ENCODE measurements at regions of chr1 and their contacts with region 1.

Region 1: DNA sequence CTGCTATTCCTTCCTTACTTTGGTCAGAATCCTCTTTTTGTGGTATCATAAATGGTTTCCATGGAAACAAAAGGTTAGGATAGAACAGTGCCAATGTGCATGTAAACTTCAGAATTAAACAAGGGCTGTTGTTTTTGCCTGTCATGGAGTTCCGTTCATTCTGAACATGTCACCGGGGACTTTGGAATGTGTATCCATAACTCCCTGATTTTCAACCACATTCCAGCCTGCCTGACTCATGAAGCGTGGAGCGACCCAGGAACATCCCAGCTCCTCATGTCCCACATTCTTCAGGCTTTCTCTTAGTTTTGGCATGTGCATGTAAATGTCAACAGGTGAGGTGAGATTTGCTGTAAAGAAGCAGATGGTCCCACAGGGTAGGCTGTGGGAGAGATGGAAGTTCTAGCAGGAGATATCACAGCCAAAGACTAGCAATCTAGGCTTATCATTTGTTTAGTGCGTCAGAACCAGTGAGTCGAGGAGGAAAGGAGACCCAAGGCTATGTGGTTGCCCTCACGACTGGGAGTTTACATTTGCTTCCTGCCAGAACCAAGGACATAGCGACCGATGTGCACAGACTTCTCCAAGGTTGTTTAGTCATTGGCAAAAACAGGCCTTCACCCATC is 23.0 kb upstream of the DNAJC11 start:
- DNase-seq: no peak
- H3K4me3 ChIP-seq: no peak overlapping the region
- H3K4me3 Mint-ChIP-seq: no peak overlapping the region
- H3K27ac ChIP-seq: no peak overlapping the region
- H3K27ac Mint-ChIP-seq: no peak overlapping the region
- H3K4me1 ChIP-seq: no peaks in the 10 kb centered on the region
- H3K4me1 Mint-ChIP-seq: peaks cover 0 to 2% (median under 1%) of the 10 kb centered on the region in 4 donors
- H3K27me3 ChIP-seq: no peaks in the 10 kb centered on the region
- H3K27me3 Mint-ChIP-seq: peaks cover 8% of the 10 kb centered on the region in 2 donors

Region 2: GRCh38 chr1:6475381-6476133 is 249.1 kb before region 1 on chr1:
- CTCF ChIA-PET with region 1: no interaction called
- POLR2A ChIA-PET with region 1: no interaction called
- intact Hi-C with region 1: no loop called
- DNase-seq: peak; percentile 76 to 84 (median 79)
- H3K4me3 ChIP-seq: no peak overlapping the region
- H3K4me3 Mint-ChIP-seq: peak overlapping the region in 2 of 8 donors; percentile 35 to 49
- H3K27ac ChIP-seq: no peak overlapping the region
- H3K27ac Mint-ChIP-seq: peak overlapping the region in 2 of 7 donors; percentile 18 to 27
- H3K4me1 ChIP-seq: peaks cover 5% of the 10 kb centered on the region
- H3K4me1 Mint-ChIP-seq: peaks cover 2 to 8% (median 5%) of the 10 kb centered on the region in 4 donors
- H3K27me3 ChIP-seq: no peaks in the 10 kb centered on the region
- H3K27me3 Mint-ChIP-seq: no peaks in the 10 kb centered on the region

Region 3: GRCh38 chr1:6822530-6823359 is 98.1 kb after region 1 on chr1:
- CTCF ChIA-PET with region 1: no interaction called
- POLR2A ChIA-PET with region 1: no interaction called
- intact Hi-C with region 1: no loop called
- DNase-seq: no peak
- H3K4me3 ChIP-seq: no peak overlapping the region
- H3K4me3 Mint-ChIP-seq: no peak overlapping the region
- H3K27ac ChIP-seq: no peak overlapping the region
- H3K27ac Mint-ChIP-seq: peak overlapping the region in 1 of 7 donors; percentile 16
- H3K4me1 ChIP-seq: peaks cover 15% of the 10 kb centered on the region
- H3K4me1 Mint-ChIP-seq: peaks cover 28 to 49% (median 31%) of the 10 kb centered on the region in 4 donors
- H3K27me3 ChIP-seq: no peaks in the 10 kb centered on the region
- H3K27me3 Mint-ChIP-seq: no peaks in the 10 kb centered on the region

Region 4: DNA sequence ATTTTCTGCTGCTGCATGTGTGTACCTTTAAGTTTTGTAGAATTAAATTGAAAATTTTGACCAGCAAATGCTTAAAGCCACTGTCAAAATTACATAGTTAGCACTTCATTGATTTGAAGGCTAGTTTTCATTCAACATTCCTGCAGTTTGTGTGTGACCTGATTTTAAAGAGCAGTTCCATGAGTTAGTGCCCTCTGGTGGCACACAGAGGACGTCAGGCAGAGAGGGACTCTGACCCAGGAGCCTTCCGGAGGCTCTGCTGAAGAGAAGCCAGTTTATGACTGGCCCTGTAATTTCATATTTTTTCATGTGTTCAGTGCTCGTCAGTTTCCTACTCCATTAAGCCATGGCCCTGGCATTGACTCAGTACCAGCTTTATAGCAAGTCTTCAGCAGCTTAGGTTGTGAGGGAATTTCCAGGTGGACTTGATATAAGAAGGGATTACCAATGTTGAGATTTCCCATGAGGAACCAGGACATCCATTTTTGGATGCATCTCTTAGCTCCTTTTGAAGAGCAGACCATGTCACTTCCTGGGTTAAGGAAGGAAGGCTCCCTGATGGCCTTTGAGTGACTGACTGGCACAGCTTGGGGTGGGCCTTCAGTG is 165.3 kb after region 1 on chr1:
- CTCF ChIA-PET with region 1: interaction called, 18 read pairs
- POLR2A ChIA-PET with region 1: no interaction called
- intact Hi-C with region 1: loop called (anchors 1 kb)
- DNase-seq: peak in 4 of 5 donors; percentile 4 to 23 (median 14)
- H3K4me3 ChIP-seq: no peak overlapping the region
- H3K4me3 Mint-ChIP-seq: no peak overlapping the region
- H3K27ac ChIP-seq: no peak overlapping the region
- H3K27ac Mint-ChIP-seq: no peak overlapping the region
- H3K4me1 ChIP-seq: no peaks in the 10 kb centered on the region
- H3K4me1 Mint-ChIP-seq: peaks cover 0 to 2% (median under 1%) of the 10 kb centered on the region in 4 donors
- H3K27me3 ChIP-seq: no peaks in the 10 kb centered on the region
- H3K27me3 Mint-ChIP-seq: no peaks in the 10 kb centered on the region

Region 5: GRCh38 chr1:7646981-7647901 is 922.6 kb after region 1 on chr1:
- CTCF ChIA-PET with region 1: interaction called, 11 read pairs
- POLR2A ChIA-PET with region 1: no interaction called
- intact Hi-C with region 1: no loop called
- DNase-seq: peak in 4 of 5 donors; percentile 35 to 51 (median 48)
- H3K4me3 ChIP-seq: no peak overlapping the region
- H3K4me3 Mint-ChIP-seq: no peak overlapping the region
- H3K27ac ChIP-seq: no peak overlapping the region
- H3K27ac Mint-ChIP-seq: no peak overlapping the region
- H3K4me1 ChIP-seq: no peaks in the 10 kb centered on the region
- H3K4me1 Mint-ChIP-seq: peaks cover 0 to 2% (median 0%) of the 10 kb centered on the region in 4 donors
- H3K27me3 ChIP-seq: no peaks in the 10 kb centered on the region
- H3K27me3 Mint-ChIP-seq: peaks cover 0 to 2% of the 10 kb centered on the region in 2 donors

Measured in CD4-positive, alpha-beta memory T cell (primary cell).